Caco-2 (cell line): ENCODE measurements at regions of chr17 and their contacts with region 1.

Region 1: DNA sequence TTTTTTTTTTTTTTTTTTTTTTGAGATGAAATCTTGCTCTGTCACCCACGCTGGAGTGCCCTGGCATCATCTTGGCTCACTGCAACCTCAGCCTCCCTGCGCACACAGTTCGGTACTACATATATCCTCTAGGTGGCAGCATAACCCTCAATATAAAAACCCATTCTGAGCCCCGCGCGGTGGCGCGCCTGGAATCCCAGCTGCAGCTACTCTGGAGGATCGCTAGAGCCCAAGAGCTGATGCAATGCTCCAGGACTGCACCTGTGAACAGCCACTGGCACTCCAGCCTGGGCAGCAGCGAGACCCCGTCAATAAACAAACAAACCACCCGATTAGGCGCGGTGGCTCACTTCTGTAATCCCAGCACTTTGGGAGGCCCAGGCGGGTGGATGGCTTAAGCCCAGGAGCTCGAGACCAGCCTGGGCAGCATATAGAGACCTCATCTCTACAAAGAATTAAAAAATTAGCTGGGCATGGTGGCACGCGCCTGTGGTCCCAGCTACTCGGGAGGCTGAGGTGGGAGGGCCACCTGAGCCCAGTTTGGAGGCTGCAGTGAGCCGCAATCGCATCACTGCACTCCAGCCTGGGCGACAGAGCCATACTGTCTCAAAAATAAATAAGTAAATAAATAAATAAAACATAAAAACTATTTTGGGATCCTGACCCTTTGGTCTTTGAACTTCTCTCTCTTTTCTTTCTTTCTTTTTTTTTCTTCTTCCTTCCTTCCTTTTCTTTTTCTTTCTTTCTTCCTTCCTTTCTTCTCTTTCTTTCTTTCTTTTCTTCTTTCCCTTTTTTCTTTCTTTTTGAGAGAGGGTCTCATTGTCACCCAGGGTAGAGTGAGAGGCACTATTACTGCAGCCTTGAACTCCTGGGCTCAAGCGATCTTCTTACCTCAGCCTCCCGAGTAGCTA is 15.4 kb upstream of the AKAP10 start:
- DNase-seq: peak; percentile 93
- H3K4me3 ChIP-seq: no peak overlapping the region
- H3K4me3 Mint-ChIP-seq: peak overlapping the region; percentile 66
- H3K27ac Mint-ChIP-seq: peak overlapping the region; percentile 71
- H3K4me1 ChIP-seq: peaks cover 4% of the 10 kb centered on the region; the same call in 1 of the 2 replicates
- H3K4me1 Mint-ChIP-seq: peaks cover 7% of the 10 kb centered on the region
- H3K27me3 ChIP-seq: no peaks in the 10 kb centered on the region
- H3K27me3 Mint-ChIP-seq: no peaks in the 10 kb centered on the region
- CTCF ChIP-seq: peak; percentile 76 to 80

Region 2: GRCh38 chr17:19977311-19978208 is 15.5 kb before region 1 on chr17 and contains the start of gene AKAP10:
- CTCF ChIA-PET with region 1: interaction called, 10 read pairs
- POLR2A ChIA-PET with region 1: interaction called, 3 read pairs
- intact Hi-C with region 1: no loop called
- DNase-seq: peak; percentile 95 to 96
- H3K4me3 ChIP-seq: peak within 1 kb of the TSS; percentile 83
- H3K4me3 Mint-ChIP-seq: peak within 1 kb of the TSS; percentile 94
- H3K27ac Mint-ChIP-seq: peak within 1 kb of the TSS; percentile 90
- H3K4me1 ChIP-seq: peaks cover 4% of the 10 kb centered on the region; the same call in 1 of the 2 replicates
- H3K4me1 Mint-ChIP-seq: no peaks in the 10 kb centered on the region
- H3K27me3 ChIP-seq: no peaks in the 10 kb centered on the region
- H3K27me3 Mint-ChIP-seq: no peaks in the 10 kb centered on the region
- CTCF ChIP-seq: no peak
- total RNA-seq, gene AKAP10: 39.9 and 41.2 TPM in 2 replicates

Region 3: GRCh38 chr17:20095336-20096080 is 102.5 kb after region 1 on chr17:
- CTCF ChIA-PET with region 1: interaction called, 48 read pairs
- POLR2A ChIA-PET with region 1: no interaction called
- intact Hi-C with region 1: loop called (anchors 1 kb)
- DNase-seq: peak; percentile 64 to 69
- H3K4me3 ChIP-seq: no peak overlapping the region
- H3K4me3 Mint-ChIP-seq: peak overlapping the region; percentile 22
- H3K27ac Mint-ChIP-seq: no peak overlapping the region
- H3K4me1 ChIP-seq: no peaks in the 10 kb centered on the region
- H3K4me1 Mint-ChIP-seq: no peaks in the 10 kb centered on the region
- H3K27me3 ChIP-seq: no peaks in the 10 kb centered on the region; the same call in 1 of the 2 replicates
- H3K27me3 Mint-ChIP-seq: peaks cover 15% of the 10 kb centered on the region
- CTCF ChIP-seq: peak; percentile 24 to 78